CD8-positive, alpha-beta memory T cell (primary cell): ENCODE measurements at regions of chr9 and their contacts with region 1.

Region 1: DNA sequence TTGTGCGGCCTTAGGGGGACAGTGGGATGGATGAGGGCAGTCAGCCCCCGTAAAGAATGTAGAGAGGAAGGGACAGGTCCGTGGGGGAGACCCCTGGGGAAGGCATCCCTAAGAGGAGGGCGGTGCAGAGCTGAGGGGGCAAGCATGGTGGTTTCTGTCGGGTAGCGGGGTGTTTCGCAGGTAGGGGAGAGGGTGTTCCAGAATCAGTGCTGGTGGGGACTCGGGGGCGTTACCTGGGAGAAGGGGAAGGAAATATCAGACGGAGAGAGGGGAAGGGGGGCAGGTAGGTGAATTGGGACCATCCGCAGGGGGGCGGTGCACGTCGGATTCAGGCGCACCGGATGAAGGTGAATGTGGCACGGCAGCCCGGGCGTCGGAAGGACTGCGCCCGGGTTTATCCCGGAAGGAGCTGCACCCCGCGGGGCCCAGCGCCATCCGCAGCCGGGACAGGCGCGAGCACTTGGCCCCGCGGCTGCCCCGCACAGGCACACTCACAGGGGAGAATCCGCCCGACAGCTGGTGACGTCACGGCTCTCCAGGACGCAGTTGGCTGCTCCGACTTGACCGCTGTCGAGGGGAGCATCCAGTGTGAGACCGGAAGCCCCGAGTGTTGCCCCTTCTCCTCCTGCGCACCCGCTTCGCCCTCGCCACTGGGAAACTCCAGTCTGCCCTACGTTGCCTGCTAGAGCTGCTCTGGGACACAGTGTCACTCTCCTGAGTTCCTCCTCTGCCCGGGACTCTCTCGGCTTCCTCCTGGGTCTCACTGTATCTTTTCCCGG is 1.3 kb downstream of the CD72 start:
- DNase-seq: peak; percentile 63 to 84 (median 71)
- H3K4me3 ChIP-seq: peak overlapping the region; percentile 82
- H3K4me3 Mint-ChIP-seq: peak overlapping the region; percentile 85 to 92 (median 89)
- H3K27ac ChIP-seq: peak overlapping the region; percentile 70
- H3K27ac Mint-ChIP-seq: peak overlapping the region; percentile 89 to 100 (median 98)
- H3K4me1 ChIP-seq: peaks cover 34% of the 10 kb centered on the region
- H3K4me1 Mint-ChIP-seq: peaks cover 42 to 49% (median 46%) of the 10 kb centered on the region in 3 donors
- H3K27me3 ChIP-seq: no peaks in the 10 kb centered on the region
- H3K27me3 Mint-ChIP-seq: peaks cover 0 to 1% of the 10 kb centered on the region in 2 donors

Region 2: GRCh38 chr9:35603987-35604577 is 12.8 kb before region 1 on chr9:
- CTCF ChIA-PET with region 1: interaction called, 39 read pairs
- POLR2A ChIA-PET with region 1: interaction called, 6 read pairs
- DNase-seq: peak; percentile 99 to 100 (median 99)
- H3K4me3 ChIP-seq: peak overlapping the region; percentile 99
- H3K4me3 Mint-ChIP-seq: peak overlapping the region; percentile 94 to 99 (median 98)
- H3K27ac ChIP-seq: peak overlapping the region; percentile 87
- H3K27ac Mint-ChIP-seq: peak overlapping the region; percentile 96 to 100 (median 98)
- H3K4me1 ChIP-seq: peaks cover 21% of the 10 kb centered on the region
- H3K4me1 Mint-ChIP-seq: peaks cover 33 to 38% (median 34%) of the 10 kb centered on the region in 3 donors
- H3K27me3 ChIP-seq: no peaks in the 10 kb centered on the region
- H3K27me3 Mint-ChIP-seq: peaks cover 0 to 2% of the 10 kb centered on the region in 2 donors

Region 3: DNA sequence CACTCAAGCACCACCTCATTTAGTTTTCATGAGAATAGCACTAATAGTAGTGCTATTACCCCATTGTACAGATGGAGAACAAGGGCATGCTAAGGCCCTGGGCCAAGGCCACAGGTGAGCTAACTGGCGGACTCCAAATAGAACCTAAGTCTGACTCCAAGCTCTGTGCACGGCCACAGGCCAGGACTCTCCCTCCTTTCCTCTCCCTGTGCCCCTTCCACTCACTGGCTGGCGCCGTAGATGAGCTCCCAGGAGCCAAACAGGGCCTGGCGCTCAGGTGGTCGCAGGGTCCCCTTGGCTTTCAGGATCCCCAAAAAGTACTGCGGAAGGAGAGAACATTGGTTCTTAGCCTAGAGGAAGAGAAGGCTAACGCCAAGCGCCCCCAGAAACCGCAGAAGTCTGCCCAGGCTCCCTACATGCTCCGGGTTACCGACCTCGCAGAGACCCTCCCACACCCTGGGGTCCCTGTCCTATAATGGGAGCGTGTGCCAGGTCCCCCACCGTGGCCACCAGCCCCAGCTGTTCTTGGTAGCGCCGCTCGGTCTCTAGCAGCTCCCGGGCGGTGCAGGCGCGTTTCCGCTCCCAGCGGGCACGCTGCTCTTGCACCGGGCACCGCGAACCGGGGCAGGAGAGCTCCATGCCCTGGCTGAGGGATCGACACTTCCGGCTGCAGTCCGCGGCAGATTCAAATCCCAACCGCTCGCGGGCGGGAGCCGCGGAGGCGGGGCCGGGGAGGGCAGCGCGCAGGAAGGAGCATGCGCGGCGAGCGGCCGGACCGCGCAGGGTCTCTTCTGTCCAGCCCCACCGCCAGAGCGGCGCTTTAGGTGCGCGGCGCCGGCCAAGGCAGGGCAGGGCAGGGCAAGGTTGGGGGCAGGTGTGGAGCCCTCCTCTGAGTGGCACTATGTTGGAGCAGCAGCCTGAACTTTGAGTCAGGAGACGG is 47.9 kb after region 1 on chr9 and contains the start of gene ARHGEF39:
- CTCF ChIA-PET with region 1: interaction called, 21 read pairs
- POLR2A ChIA-PET with region 1: no interaction called
- DNase-seq: peak; percentile 60 to 79 (median 71)
- H3K4me3 ChIP-seq: peak within 1 kb of the TSS; percentile 84
- H3K4me3 Mint-ChIP-seq: peak within 1 kb of the TSS; percentile 87 to 91 (median 89)
- H3K27ac ChIP-seq: peak within 1 kb of the TSS; percentile 39
- H3K27ac Mint-ChIP-seq: peak within 1 kb of the TSS; percentile 73 to 100 (median 97)
- H3K4me1 ChIP-seq: peaks cover 52% of the 10 kb centered on the region
- H3K4me1 Mint-ChIP-seq: peaks cover 53 to 68% (median 64%) of the 10 kb centered on the region in 3 donors
- H3K27me3 ChIP-seq: no peaks in the 10 kb centered on the region
- H3K27me3 Mint-ChIP-seq: peaks cover 0 to 2% of the 10 kb centered on the region in 2 donors
- total RNA-seq, gene ARHGEF39: 7.7 to 10.7 TPM